Caco-2 (cell line): ENCODE measurements at regions of chr12 and their contacts with region 1.

Region 1: GRCh38 chr12:63843721-63844390 is 644 bp upstream of the SRGAP1 start:
- DNase-seq: peak; percentile 95
- H3K4me3 ChIP-seq: peak overlapping the region; percentile 91
- H3K4me3 Mint-ChIP-seq: peak overlapping the region; percentile 100
- H3K27ac Mint-ChIP-seq: peak overlapping the region; percentile 94
- H3K4me1 ChIP-seq: peaks cover 22% of the 10 kb centered on the region
- H3K4me1 Mint-ChIP-seq: peaks cover 15% of the 10 kb centered on the region
- H3K27me3 ChIP-seq: no peaks in the 10 kb centered on the region
- H3K27me3 Mint-ChIP-seq: no peaks in the 10 kb centered on the region
- CTCF ChIP-seq: peak; percentile 90 to 97

Region 2: DNA sequence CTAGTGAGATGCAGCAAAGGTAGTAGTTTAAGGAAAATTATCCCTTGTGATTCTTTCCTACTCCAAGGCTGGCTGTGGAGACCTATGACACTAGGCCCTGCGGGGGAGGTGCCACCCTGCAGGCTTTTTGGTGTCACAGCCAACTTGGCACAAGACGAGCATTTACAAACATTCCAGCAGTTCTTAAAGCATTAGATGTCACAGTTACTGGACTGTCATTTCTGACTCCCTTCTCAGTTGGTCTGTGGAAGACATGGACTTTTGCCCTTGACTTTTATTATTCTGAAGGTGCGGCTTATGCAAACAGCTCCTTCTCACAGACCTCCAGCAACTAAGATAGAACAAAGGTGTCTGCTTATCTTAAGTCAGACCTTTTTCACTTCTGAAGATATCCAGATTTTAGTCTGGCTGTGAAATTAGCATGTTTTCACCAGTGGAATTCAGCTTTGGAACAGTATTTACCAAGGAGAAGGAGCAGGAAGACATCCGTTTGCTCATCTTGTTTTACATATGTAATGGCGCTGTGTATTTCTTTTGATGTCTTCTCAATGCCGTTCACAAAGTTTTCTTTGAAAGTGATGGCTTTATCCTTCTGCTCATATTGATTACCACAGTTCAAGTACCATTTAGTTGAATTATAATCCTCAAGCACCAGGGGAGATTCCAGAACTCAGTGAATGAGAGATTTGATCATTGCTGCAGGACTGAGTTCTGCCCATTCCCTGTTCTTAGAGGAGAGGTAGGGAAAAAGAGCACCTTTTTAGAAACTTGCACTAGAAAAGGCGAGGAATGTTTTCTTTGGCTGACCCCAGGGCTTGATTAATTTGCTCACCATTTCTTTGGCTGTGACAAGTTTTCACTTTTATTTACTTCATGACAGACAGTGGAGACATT is 18.6 kb after region 1 on chr12:
- CTCF ChIA-PET with region 1: no interaction called
- POLR2A ChIA-PET with region 1: interaction called, 3 read pairs
- intact Hi-C with region 1: loop called (anchors 1 kb)
- DNase-seq: peak; percentile 76 to 83
- H3K4me3 ChIP-seq: no peak overlapping the region
- H3K4me3 Mint-ChIP-seq: peak overlapping the region; percentile 50
- H3K27ac Mint-ChIP-seq: peak overlapping the region; percentile 60
- H3K4me1 ChIP-seq: peaks cover 41% of the 10 kb centered on the region
- H3K4me1 Mint-ChIP-seq: peaks cover 14% of the 10 kb centered on the region
- H3K27me3 ChIP-seq: no peaks in the 10 kb centered on the region
- H3K27me3 Mint-ChIP-seq: no peaks in the 10 kb centered on the region
- CTCF ChIP-seq: no peak

Region 3: GRCh38 chr12:63917864-63918799 is 74.3 kb after region 1 on chr12:
- CTCF ChIA-PET with region 1: interaction called, 3 read pairs
- POLR2A ChIA-PET with region 1: interaction called, 4 read pairs
- intact Hi-C with region 1: loop called (anchors 1 kb)
- DNase-seq: peak; percentile 52 to 69
- H3K4me3 ChIP-seq: no peak overlapping the region
- H3K4me3 Mint-ChIP-seq: peak overlapping the region; percentile 8
- H3K27ac Mint-ChIP-seq: peak overlapping the region; percentile 77
- H3K4me1 ChIP-seq: peaks cover 74% of the 10 kb centered on the region
- H3K4me1 Mint-ChIP-seq: peaks cover 47% of the 10 kb centered on the region
- H3K27me3 ChIP-seq: no peaks in the 10 kb centered on the region
- H3K27me3 Mint-ChIP-seq: no peaks in the 10 kb centered on the region
- CTCF ChIP-seq: no peak

Region 4: DNA sequence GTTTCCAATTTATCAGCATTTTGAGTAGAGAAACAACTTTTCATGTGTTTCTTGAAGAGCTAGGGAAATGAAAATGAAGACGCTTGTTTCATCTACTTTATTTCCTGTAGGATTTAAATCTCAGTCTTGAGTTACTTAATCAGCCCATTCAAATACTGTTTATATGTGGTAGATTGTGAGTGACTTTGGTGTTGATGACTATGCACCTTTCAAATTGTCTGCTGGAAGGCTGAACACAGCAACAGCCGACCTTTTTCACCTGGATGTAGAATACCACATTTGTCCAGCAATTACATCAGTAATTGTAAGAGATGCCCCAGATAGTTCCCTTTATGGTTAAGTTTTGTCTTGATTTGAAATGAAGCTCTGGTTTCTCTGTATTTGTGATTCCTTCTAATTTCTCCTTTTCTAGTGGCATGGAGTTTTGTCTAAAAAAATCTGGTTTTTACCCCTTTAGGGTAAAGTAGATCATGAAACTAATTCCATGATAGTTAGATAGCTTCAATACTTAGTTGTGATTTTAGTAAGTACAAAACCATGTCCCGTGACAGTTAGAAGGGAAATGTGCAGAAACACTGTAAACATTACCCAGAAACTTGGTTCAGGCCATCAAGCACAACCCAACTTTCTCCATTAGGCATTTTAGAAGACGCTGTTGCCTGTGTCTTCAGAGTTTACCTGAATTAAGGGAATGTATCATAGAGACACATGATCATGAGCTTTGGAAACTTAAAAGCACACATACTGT is 165.6 kb after region 1 on chr12:
- CTCF ChIA-PET with region 1: no interaction called
- POLR2A ChIA-PET with region 1: no interaction called
- intact Hi-C with region 1: loop called (anchors 10 kb)
- DNase-seq: no peak
- H3K4me3 ChIP-seq: no peak overlapping the region
- H3K4me3 Mint-ChIP-seq: no peak overlapping the region
- H3K27ac Mint-ChIP-seq: no peak overlapping the region
- H3K4me1 ChIP-seq: peaks cover 39% of the 10 kb centered on the region
- H3K4me1 Mint-ChIP-seq: peaks cover 14% of the 10 kb centered on the region
- H3K27me3 ChIP-seq: no peaks in the 10 kb centered on the region
- H3K27me3 Mint-ChIP-seq: no peaks in the 10 kb centered on the region
- CTCF ChIP-seq: no peak

Region 5: GRCh38 chr12:64077922-64078321 is 234.1 kb after region 1 on chr12:
- CTCF ChIA-PET with region 1: no interaction called
- POLR2A ChIA-PET with region 1: no interaction called
- intact Hi-C with region 1: loop called (anchors 1 kb)
- DNase-seq: no peak
- H3K4me3 ChIP-seq: no peak overlapping the region
- H3K4me3 Mint-ChIP-seq: no peak overlapping the region
- H3K27ac Mint-ChIP-seq: no peak overlapping the region
- H3K4me1 ChIP-seq: peaks cover 15% of the 10 kb centered on the region
- H3K4me1 Mint-ChIP-seq: peaks cover 21% of the 10 kb centered on the region
- H3K27me3 ChIP-seq: no peaks in the 10 kb centered on the region
- H3K27me3 Mint-ChIP-seq: no peaks in the 10 kb centered on the region
- CTCF ChIP-seq: peak in 1 of 2 experiments; percentile 33

Region 6: DNA sequence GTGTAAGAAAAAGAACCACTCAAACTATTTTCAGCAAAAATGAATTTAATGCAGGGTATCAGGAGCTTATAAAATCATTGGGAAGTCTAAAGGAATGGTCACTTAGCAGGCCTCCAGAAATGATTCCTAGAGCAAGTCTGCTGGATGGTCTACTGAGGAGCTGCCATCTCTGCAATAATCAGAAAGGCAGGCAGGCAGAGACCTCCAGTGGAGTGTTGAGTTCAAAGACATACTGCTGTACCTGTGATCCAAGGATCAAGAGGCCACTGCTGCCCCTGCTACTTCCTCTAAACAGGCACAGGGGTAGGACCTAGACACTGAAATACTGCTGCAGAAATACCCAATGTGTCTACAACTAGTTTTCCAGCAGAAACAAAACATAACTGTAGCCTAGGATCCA is 392.7 kb after region 1 on chr12:
- CTCF ChIA-PET with region 1: interaction called, 7 read pairs
- POLR2A ChIA-PET with region 1: no interaction called
- intact Hi-C with region 1: loop called (anchors 1 kb)
- DNase-seq: peak in 1 of 2 experiments; percentile 28
- H3K4me3 ChIP-seq: no peak overlapping the region
- H3K4me3 Mint-ChIP-seq: no peak overlapping the region
- H3K27ac Mint-ChIP-seq: no peak overlapping the region
- H3K4me1 ChIP-seq: peaks cover 6% of the 10 kb centered on the region; the same call in 1 of the 2 replicates
- H3K4me1 Mint-ChIP-seq: no peaks in the 10 kb centered on the region
- H3K27me3 ChIP-seq: no peaks in the 10 kb centered on the region
- H3K27me3 Mint-ChIP-seq: no peaks in the 10 kb centered on the region
- CTCF ChIP-seq: peak in 1 of 2 experiments; percentile 32

Region 7: DNA sequence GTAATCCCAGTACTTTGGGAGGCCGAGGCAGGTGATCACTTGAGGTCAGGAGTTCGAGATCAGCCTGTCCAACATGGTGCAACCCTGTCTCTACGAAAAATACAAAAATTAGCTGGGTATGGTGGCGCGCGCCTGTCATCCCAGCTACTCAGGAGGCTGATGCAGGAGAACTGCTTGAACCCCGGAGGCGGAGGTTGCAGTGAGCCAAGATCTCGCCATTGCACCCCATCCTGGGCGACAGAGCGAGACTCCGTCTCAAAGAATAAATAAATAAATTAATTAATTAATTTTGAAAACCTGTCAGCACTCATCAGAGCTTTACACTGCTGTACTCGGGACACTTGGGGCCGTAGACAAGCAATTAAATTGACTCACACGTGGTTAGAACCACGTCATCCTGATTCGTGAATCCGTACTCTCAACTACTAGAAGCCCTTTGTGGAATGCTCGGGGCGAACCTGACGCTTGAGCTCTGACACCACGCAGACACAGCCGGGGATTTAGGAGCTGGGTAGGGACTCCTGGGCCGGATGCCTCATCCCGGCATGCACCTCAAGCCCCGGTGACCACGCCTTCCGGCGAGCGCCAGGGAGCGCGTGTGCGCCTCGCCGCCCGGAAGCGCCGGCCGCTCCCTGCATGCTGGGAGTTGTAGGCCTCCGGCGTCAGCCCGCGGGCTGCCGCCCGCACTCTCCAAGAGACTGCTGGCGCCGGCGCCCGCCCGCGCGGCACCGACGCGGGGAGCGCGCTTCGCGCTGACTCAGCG is 560.0 kb after region 1 on chr12 and contains the start of gene XPOT:
- CTCF ChIA-PET with region 1: no interaction called
- POLR2A ChIA-PET with region 1: interaction called, 4 read pairs
- intact Hi-C with region 1: loop called (anchors 1 kb)
- DNase-seq: peak; percentile 96
- H3K4me3 ChIP-seq: peak within 1 kb of the TSS; percentile 95
- H3K4me3 Mint-ChIP-seq: peak within 1 kb of the TSS; percentile 91
- H3K27ac Mint-ChIP-seq: peak within 1 kb of the TSS; percentile 99
- H3K4me1 ChIP-seq: no peaks in the 10 kb centered on the region
- H3K4me1 Mint-ChIP-seq: peaks cover 7% of the 10 kb centered on the region
- H3K27me3 ChIP-seq: no peaks in the 10 kb centered on the region
- H3K27me3 Mint-ChIP-seq: no peaks in the 10 kb centered on the region
- CTCF ChIP-seq: no peak
- total RNA-seq, gene XPOT: 164 and 174 TPM in 2 replicates